GM23248 (cell line): ENCODE measurements at regions of chr12 and their contacts with region 1.

Region 1: GRCh38 chr12:101939856-101940265 is 62.5 kb downstream of the DRAM1 start:
- DNase-seq: peak; percentile 91
- H3K4me3 ChIP-seq: no peak overlapping the region
- H3K27ac ChIP-seq: no peak overlapping the region; the same call in 1 of the 2 replicates
- H3K4me1 ChIP-seq: peaks cover 58% of the 10 kb centered on the region
- H3K27me3 ChIP-seq: no peaks in the 10 kb centered on the region

Region 2: GRCh38 chr12:100919116-100919515 is 1020.7 kb before region 1 on chr12:
- in situ Hi-C with region 1: no loop called
- DNase-seq: peak; percentile 61
- H3K4me3 ChIP-seq: no peak overlapping the region
- H3K27ac ChIP-seq: no peak overlapping the region
- H3K4me1 ChIP-seq: peaks cover 19% of the 10 kb centered on the region
- H3K27me3 ChIP-seq: no peaks in the 10 kb centered on the region

Region 3: DNA sequence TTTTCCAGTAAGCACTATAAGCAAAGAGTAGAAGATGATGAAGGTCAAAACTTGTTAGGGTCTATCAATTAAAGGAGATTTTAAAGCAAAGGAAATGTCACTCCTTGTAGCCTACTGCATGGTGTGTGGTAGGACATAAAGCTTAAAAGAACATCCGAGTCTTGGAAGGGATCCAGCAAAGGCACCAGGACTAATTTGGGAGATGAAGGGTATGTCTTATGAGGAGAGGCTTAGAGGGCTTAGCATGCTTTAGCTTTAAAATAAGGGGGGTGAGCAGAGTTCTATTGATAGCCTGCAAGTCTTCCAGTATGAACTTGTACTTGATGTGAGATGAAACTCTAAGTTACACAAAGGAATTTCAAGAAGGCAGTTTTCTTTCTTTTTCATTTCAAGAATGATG is 356.9 kb before region 1 on chr12:
- in situ Hi-C with region 1: no loop called
- DNase-seq: no peak
- H3K4me3 ChIP-seq: no peak overlapping the region
- H3K27ac ChIP-seq: no peak overlapping the region
- H3K4me1 ChIP-seq: no peaks in the 10 kb centered on the region
- H3K27me3 ChIP-seq: no peaks in the 10 kb centered on the region

Region 4: GRCh38 chr12:102144221-102144620 is 204.4 kb after region 1 on chr12:
- in situ Hi-C with region 1: no loop called
- DNase-seq: no peak
- H3K4me3 ChIP-seq: no peak overlapping the region
- H3K27ac ChIP-seq: no peak overlapping the region
- H3K4me1 ChIP-seq: no peaks in the 10 kb centered on the region
- H3K27me3 ChIP-seq: no peaks in the 10 kb centered on the region

Region 5: DNA sequence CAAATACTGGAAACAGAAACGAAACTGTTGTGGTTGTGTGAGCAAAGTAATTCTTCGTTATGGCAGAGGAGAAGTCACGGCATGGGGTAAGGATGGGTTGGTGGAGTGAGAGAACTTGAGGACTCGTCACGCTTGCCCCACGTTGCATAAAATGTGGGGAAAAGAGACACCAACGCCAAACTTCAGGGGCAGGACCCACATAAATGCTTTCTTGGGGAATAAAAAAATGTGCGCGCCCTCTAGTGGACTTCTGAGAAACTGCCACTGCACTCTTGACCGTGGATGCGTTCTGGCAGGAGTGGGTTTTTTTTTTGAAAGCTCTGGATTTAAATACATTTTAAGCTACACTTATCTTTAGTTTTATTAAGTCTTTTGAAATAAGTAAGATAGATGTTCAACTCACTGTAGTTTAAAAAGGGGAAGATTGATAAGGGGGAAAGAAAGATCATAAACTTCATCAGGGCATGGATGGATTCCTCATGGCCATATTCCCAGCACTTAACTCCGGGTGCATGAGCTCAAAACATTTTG is 544.6 kb after region 1 on chr12:
- in situ Hi-C with region 1: loop called (anchors 25 kb)
- DNase-seq: peak; percentile 81
- H3K4me3 ChIP-seq: peak overlapping the region; percentile 60
- H3K27ac ChIP-seq: peak overlapping the region; percentile 63
- H3K4me1 ChIP-seq: peaks cover 27% of the 10 kb centered on the region
- H3K27me3 ChIP-seq: no peaks in the 10 kb centered on the region

Region 6: DNA sequence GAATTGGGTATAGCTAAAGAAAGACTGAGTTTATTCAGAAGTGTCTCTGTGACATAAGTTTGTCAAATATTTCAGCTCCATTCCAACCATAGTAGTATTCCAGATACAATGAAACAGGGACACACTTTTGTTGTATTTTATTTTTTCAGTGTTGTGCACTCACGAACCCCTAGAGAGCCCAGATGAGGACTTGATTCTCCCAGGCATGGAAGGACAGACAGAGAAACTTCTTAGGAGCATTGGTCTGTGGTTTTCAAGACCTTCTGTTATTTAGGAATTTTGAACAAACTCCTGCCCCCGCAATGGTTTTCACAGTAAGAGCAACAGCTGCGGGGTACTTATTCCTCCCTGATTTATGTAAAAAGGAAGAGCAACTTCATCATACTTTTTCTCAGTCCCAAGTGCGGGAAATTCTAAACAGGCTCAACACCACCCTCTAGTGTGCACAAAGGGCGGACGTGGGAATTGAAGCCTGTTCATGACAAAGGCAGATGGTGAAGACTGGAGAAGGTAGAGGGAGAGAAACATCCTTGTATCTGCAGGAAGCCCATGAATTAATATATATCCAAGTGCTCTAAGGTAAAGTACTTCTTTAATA is 829.6 kb after region 1 on chr12:
- in situ Hi-C with region 1: loop called (anchors 25 kb)
- DNase-seq: peak; percentile 81
- H3K4me3 ChIP-seq: no peak overlapping the region
- H3K27ac ChIP-seq: no peak overlapping the region
- H3K4me1 ChIP-seq: peaks cover 7% of the 10 kb centered on the region; the same call in 1 of the 2 replicates
- H3K27me3 ChIP-seq: no peaks in the 10 kb centered on the region

Region 7: GRCh38 chr12:103560604-103561573 is 1621.0 kb after region 1 on chr12:
- in situ Hi-C with region 1: loop called (anchors 25 kb)
- DNase-seq: peak; percentile 99
- H3K4me3 ChIP-seq: no peak overlapping the region
- H3K27ac ChIP-seq: peak overlapping the region; percentile 89
- H3K4me1 ChIP-seq: peaks cover 22% of the 10 kb centered on the region
- H3K27me3 ChIP-seq: no peaks in the 10 kb centered on the region